A549 (cell line): ENCODE measurements at regions of chr15 and their contacts with region 1.

Region 1: GRCh38 chr15:68559345-68560310 is 19.2 kb upstream of the CORO2B start:
- DNase-seq: peak; percentile 84 to 91
- ATAC-seq: peak; percentile 90 to 96
- H3K4me3 ChIP-seq: peak overlapping the region; percentile 43
- H3K27ac ChIP-seq: peak overlapping the region; percentile 41 to 73; a peak in 5 of 6 replicates
- H3K4me1 ChIP-seq: no peaks in the 10 kb centered on the region
- CTCF ChIP-seq: peak; percentile 97
- EP300 ChIP-seq: no peak
- POLR2A ChIP-seq: no peak
- RAD21 ChIP-seq: peak; percentile 85 to 91

Region 2: DNA sequence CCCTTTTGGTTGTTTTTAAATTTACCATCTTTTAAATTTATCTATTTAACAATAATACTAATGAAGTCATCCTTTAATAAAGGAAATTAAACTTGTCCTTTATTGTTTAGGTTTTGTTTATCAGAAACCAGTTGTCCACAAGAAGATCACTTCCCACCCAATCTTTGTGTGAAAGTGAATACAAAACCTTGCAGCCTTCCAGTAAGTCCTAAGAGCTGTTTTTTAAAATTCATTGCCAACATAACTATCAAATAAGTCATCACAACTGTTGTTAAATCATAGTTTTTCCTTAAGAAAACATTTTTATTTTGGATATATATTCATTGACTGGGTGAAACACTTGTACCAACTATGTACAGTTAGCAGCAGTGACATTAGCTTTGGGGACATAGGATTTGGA is 413.9 kb before region 1 on chr15:
- CTCF ChIA-PET with region 1: no interaction called
- POLR2A ChIA-PET with region 1: no interaction called
- DNase-seq: no peak
- ATAC-seq: no peak
- H3K4me3 ChIP-seq: no peak overlapping the region
- H3K27ac ChIP-seq: no peak overlapping the region
- H3K4me1 ChIP-seq: peaks cover 5% of the 10 kb centered on the region; the same call in 2 of the 3 replicates
- CTCF ChIP-seq: no peak
- EP300 ChIP-seq: no peak
- POLR2A ChIP-seq: no peak
- RAD21 ChIP-seq: no peak

Region 3: DNA sequence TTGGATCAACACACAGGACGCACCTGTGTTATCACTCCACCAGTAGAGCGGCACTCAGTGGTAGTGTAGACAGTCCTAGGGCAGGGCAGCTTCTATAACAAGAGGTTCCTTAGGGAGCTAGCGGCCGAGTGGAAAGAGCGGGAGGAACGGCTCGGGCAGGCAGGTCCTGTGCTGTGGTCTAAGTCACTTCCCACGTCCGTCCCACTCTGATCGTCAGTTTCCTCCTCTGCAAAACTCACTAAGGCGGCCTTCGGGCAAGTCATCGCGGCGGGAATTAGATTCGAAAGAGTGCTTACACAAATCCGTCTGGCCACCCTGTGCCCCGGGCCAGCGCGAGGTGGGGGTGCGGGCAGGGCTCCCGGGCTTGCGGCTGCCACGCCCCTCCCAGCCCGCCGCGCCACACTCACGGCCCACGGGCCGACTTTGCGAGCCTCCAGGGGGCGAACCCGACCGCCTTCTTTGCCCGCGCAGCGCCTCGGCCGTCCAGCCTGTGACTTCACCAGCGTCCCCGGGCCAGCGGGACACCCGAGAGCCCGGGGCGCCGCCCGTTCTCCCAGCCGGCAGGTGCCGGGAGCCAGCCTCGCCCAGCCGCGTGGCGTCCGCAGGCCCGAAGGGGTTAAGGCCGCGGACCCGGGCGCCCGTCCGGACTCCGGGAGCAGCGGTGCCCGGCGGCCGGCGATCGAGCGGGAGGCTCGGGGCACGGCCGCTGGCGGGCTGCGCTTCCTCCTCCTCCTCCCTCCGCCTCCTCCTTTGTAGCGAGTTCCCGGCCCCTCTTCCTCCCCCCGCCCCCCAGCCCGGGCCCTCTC is 18.7 kb after region 1 on chr15:
- CTCF ChIA-PET with region 1: interaction called, 413 read pairs
- POLR2A ChIA-PET with region 1: no interaction called
- DNase-seq: peak in 1 of 2 experiments; percentile 47
- ATAC-seq: peak; percentile 54 to 71
- H3K4me3 ChIP-seq: peak overlapping the region; percentile 63
- H3K27ac ChIP-seq: peak overlapping the region; percentile 67 to 81
- H3K4me1 ChIP-seq: 0 out of 3 replicates have a peak, but pooled peaks cover 4% of the 10 kb centered on the region
- CTCF ChIP-seq: peak; percentile 35; the same call in 2 of the 3 replicates
- EP300 ChIP-seq: no peak
- POLR2A ChIP-seq: no peak; the same call in 1 of the 2 replicates
- RAD21 ChIP-seq: peak in 1 of 2 experiments; percentile 43; a peak in 3 of 5 replicates

Region 4: GRCh38 chr15:68631601-68632051 is 72.0 kb after region 1 on chr15:
- CTCF ChIA-PET with region 1: interaction called, 25 read pairs
- POLR2A ChIA-PET with region 1: no interaction called
- DNase-seq: no peak
- ATAC-seq: peak in 1 of 2 experiments; percentile 54; a peak in 3 of 6 replicates
- H3K4me3 ChIP-seq: no peak overlapping the region
- H3K27ac ChIP-seq: no peak overlapping the region
- H3K4me1 ChIP-seq: no peaks in the 10 kb centered on the region
- CTCF ChIP-seq: no peak
- EP300 ChIP-seq: no peak
- POLR2A ChIP-seq: no peak
- RAD21 ChIP-seq: no peak

Region 5: GRCh38 chr15:68644077-68644904 is 84.7 kb after region 1 on chr15:
- CTCF ChIA-PET with region 1: interaction called, 110 read pairs
- POLR2A ChIA-PET with region 1: no interaction called
- DNase-seq: peak; percentile 48 to 71
- ATAC-seq: no peak
- H3K4me3 ChIP-seq: no peak overlapping the region
- H3K27ac ChIP-seq: peak overlapping the region; percentile 54 to 71
- H3K4me1 ChIP-seq: peaks cover 29% of the 10 kb centered on the region
- CTCF ChIP-seq: no peak
- EP300 ChIP-seq: no peak
- POLR2A ChIP-seq: no peak
- RAD21 ChIP-seq: no peak

Region 6: DNA sequence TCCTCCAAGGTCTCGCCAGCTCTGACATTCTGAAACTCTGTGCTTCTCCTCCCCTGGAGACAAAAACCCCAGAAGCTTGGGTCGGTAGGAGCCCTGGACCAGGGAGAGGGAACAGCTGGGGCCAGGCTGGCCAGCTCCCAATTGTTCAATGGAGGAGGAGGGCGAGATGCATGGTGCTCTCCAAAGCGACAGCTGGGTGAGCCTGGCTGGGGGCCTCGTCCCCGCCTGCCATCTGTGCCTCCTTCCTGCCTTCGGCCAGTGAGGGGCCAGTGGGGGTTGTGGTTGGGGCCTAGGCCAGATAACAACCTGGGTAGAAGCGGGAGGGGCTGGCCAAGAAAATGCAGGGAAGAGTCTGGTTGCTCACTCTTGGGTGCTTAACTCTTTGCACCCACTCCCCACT is 98.5 kb after region 1 on chr15:
- CTCF ChIA-PET with region 1: interaction called, 452 read pairs
- POLR2A ChIA-PET with region 1: no interaction called
- DNase-seq: no peak
- ATAC-seq: no peak; a peak in 1 of 6 replicates
- H3K4me3 ChIP-seq: no peak overlapping the region
- H3K27ac ChIP-seq: no peak overlapping the region
- H3K4me1 ChIP-seq: no peaks in the 10 kb centered on the region
- CTCF ChIP-seq: no peak
- EP300 ChIP-seq: no peak
- POLR2A ChIP-seq: no peak
- RAD21 ChIP-seq: no peak

Region 7: DNA sequence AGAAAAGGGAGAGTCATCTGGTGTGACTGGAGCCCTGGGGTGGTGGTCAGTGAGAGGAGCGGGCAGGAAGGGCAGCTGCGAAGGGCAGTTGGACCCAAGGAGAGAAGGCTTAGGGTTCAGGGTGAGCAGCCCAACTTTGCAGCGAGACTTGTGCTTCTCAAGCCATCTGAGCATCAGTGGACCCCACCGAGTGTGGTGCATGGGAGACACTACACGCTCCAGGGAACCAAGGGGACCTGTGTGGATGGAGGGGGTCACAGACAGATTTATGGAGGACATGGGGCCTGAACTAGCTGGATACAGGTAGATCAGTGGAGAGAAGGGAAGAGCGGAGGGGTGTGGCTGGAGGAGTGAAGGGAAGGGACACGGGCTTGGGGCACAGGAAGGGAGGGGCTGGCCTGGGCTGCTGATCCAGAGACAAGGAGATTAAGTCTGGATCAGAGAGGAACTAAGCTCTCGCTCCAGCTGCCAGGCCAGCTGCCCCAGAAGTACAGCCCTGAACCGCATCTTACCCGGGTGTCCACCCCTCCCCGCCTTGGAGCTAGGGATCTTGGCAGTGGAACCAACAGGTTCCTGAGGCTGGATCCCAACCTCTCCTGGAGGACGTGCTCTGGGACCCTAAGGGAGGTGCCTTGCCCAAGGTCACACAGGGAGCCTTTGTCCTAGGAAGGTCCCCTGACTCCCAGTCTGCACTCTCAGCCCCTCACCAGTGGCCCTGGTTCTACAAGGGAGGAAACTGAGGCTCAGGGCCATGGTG is 139.7 kb after region 1 on chr15:
- CTCF ChIA-PET with region 1: interaction called, 10 read pairs
- POLR2A ChIA-PET with region 1: no interaction called
- DNase-seq: no peak
- ATAC-seq: no peak; a peak in 3 of 6 replicates
- H3K4me3 ChIP-seq: no peak overlapping the region
- H3K27ac ChIP-seq: no peak overlapping the region
- H3K4me1 ChIP-seq: no peaks in the 10 kb centered on the region
- CTCF ChIP-seq: no peak
- EP300 ChIP-seq: no peak
- POLR2A ChIP-seq: no peak
- RAD21 ChIP-seq: no peak

Region 8: GRCh38 chr15:68924866-68925560 is 365.4 kb after region 1 on chr15:
- CTCF ChIA-PET with region 1: interaction called, 35 read pairs
- POLR2A ChIA-PET with region 1: no interaction called
- DNase-seq: peak; percentile 78 to 90
- ATAC-seq: peak; percentile 96 to 98
- H3K4me3 ChIP-seq: no peak overlapping the region
- H3K27ac ChIP-seq: no peak overlapping the region
- H3K4me1 ChIP-seq: no peaks in the 10 kb centered on the region
- CTCF ChIP-seq: peak; percentile 97
- EP300 ChIP-seq: no peak
- POLR2A ChIP-seq: no peak
- RAD21 ChIP-seq: peak; percentile 96 to 98